ENCODE measurements at regions of chr2 and their contacts with region 1.

Region 1: DNA sequence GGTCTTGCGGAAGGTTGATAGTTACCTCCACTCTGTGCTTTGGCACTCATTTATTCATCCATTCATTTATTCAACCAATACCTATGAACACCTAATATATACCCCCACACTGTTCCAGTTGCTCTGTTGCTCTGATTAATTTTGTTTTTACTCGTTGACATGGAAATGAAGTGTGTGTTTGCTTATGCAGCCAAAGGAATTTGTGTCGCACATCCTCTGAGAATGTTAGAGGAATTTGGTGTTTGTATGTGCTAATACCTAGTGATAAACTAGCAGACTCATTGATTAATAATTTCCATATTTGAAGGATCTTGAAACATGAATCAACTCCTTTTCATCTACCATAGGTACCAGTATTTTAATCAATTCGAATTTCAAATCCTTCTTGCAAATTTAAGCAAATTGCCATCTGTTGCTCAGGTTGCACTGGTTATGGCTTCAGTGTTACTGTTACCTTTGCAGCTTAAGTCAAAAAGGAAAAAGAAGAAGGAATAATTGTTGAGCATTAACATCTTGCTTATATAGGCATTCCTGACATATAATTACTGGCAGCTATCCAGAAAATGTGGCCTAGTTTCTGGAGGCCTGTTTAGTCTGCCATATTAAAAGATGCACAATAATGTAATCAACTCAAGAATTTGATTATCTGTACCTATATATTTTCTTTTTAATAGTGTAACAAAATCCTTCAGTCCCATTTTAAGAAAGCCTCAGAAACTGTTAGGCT is 25.7 kb upstream of the CRIM1 start:
- DNase-seq: no peak
- H3K4me3 Mint-ChIP-seq: no peak overlapping the region
- H3K27ac Mint-ChIP-seq: no peak overlapping the region
- H3K4me1 Mint-ChIP-seq: no peaks in the 10 kb centered on the region
- H3K27me3 Mint-ChIP-seq: peaks cover 2% of the 10 kb centered on the region

Region 2: DNA sequence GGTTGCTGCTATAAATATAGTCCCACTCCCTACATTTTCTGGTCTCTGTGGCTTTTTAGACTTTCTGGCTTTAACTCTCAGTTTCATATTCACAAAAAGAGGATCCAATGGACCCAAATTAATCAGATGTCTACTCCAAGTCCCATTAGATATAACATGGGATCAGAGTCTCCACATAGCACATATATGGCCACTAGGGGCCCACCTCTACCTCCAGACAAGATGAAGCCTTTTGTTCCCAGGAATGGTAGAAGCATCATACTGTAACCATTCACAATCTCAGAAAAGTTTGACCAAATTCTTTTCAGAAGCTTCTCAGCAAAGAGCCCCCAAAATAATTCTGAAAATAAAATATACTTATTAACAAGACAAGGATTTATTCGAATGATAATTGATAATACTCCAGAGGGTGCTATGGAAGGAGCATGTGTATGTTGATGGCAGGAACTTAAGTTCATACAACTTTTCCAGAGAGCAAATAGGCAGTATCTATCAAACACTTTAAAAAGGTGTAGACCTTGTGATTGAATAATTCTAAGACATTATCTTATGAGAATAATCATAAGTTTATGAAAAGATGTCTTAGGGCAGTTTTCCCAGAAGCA is 356.7 kb before region 1 on chr2:
- CTCF ChIA-PET with region 1: interaction called, 5 read pairs
- POLR2A ChIA-PET with region 1: no interaction called
- intact Hi-C with region 1: loop called (anchors 5 kb)
- DNase-seq: no peak
- H3K4me3 Mint-ChIP-seq: no peak overlapping the region
- H3K27ac Mint-ChIP-seq: no peak overlapping the region
- H3K4me1 Mint-ChIP-seq: peaks cover 2% of the 10 kb centered on the region
- H3K27me3 Mint-ChIP-seq: no peaks in the 10 kb centered on the region

Region 3: GRCh38 chr2:36193680-36194079 is 136.2 kb before region 1 on chr2:
- CTCF ChIA-PET with region 1: no interaction called
- POLR2A ChIA-PET with region 1: no interaction called
- intact Hi-C with region 1: no loop called
- DNase-seq: no peak
- H3K4me3 Mint-ChIP-seq: no peak overlapping the region
- H3K27ac Mint-ChIP-seq: no peak overlapping the region
- H3K4me1 Mint-ChIP-seq: no peaks in the 10 kb centered on the region
- H3K27me3 Mint-ChIP-seq: no peaks in the 10 kb centered on the region